ENCODE measurements at regions of chr10 and their contacts with region 1.

Region 1: GRCh38 chr10:66180581-66181318 is 745.1 kb upstream of the LRRTM3 start:
- DNase-seq: peak in 1 of 2 donors; percentile 41
- ATAC-seq: peak in 7 of 8 donors; percentile 39 to 74 (median 58)
- H3K4me3 ChIP-seq: no peak overlapping the region
- H3K27ac ChIP-seq: peak overlapping the region in 1 of 10 donors; percentile 5
- H3K4me1 ChIP-seq: peaks cover 0 to 4% (median 0%) of the 10 kb centered on the region in 9 donors
- H3K27me3 ChIP-seq: no peaks in the 10 kb centered on the region
- CTCF ChIP-seq: peak; percentile 56 to 83 (median 69)

Region 2: GRCh38 chr10:64733980-64734379 is 1446.8 kb before region 1 on chr10:
- intact Hi-C with region 1: loop called in 1 of 10 experiments (anchors 10 kb)
- DNase-seq: no peak
- ATAC-seq: no peak
- H3K4me3 ChIP-seq: no peak overlapping the region
- H3K27ac ChIP-seq: no peak overlapping the region
- H3K4me1 ChIP-seq: no peaks in the 10 kb centered on the region
- H3K27me3 ChIP-seq: no peaks in the 10 kb centered on the region
- CTCF ChIP-seq: peak in 5 of 9 donors; percentile 20 to 54 (median 34)

Region 3: GRCh38 chr10:64977915-64978314 is 1202.8 kb before region 1 on chr10:
- intact Hi-C with region 1: loop called in 2 of 10 experiments (anchors 5 to 10 kb)
- DNase-seq: no peak
- ATAC-seq: no peak
- H3K4me3 ChIP-seq: no peak overlapping the region
- H3K27ac ChIP-seq: no peak overlapping the region
- H3K4me1 ChIP-seq: no peaks in the 10 kb centered on the region
- H3K27me3 ChIP-seq: no peaks in the 10 kb centered on the region
- CTCF ChIP-seq: peak in 4 of 9 donors; percentile 15 to 43 (median 35)

Region 4: DNA sequence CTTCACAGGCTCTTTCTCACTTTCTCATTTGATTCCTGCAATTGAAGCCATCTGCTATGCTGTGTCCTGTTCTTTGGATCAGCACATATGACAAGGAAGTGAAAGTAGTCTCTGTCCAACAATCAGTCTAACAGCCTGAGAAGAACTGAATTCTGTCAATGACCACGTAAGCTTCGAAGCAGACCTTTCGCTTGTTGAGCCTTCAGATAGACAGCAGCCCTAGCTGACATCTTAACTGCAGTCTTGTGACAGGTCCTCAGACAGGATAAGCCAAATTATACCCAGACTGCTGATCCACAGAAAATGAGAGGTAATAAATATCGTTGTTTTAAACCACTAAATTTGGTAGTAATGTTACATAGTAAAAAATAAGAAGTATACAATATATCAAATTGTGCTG is 54.1 kb after region 1 on chr10:
- intact Hi-C with region 1: no loop called
- DNase-seq: no peak
- ATAC-seq: no peak
- H3K4me3 ChIP-seq: no peak overlapping the region
- H3K27ac ChIP-seq: no peak overlapping the region
- H3K4me1 ChIP-seq: no peaks in the 10 kb centered on the region
- H3K27me3 ChIP-seq: no peaks in the 10 kb centered on the region
- CTCF ChIP-seq: no peak

Region 5: DNA sequence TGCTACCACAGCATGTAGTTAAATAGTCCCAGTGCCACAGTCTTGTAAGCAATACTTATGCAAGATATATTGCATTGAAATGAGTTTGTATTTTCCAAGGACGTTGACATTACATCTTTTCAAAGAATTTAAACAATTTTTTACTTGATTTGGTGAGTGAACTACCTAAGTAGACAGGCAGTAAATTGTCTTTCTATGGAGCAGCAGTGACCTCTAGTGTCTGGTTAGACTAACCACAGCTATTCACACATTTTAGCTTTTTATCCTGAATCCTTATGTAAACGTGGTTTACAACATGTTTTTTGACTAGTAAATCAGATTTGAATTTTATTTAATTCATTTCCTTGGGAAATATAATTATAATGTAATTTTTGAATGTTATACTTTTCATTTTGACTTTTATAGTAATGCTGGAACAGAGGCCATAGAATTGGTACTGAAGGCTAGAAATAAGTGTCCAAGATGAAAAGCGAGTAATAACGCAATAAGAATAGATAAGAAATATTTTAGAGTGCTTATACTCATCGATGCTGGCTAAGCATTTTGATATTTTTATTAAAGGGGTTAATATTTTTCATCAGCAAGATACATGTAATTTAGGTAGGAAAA is 750.7 kb after region 1 on chr10:
- intact Hi-C with region 1: loop called in 1 of 10 experiments (anchors 5 kb)
- DNase-seq: no peak
- ATAC-seq: peak in 4 of 8 donors; percentile 31 to 60 (median 44)
- H3K4me3 ChIP-seq: no peak overlapping the region
- H3K27ac ChIP-seq: no peak overlapping the region
- H3K4me1 ChIP-seq: peaks cover 0 to 9% (median 0%) of the 10 kb centered on the region in 9 donors
- H3K27me3 ChIP-seq: peaks cover 0 to 47% (median 28%) of the 10 kb centered on the region in 7 donors
- CTCF ChIP-seq: peak; percentile 56 to 86 (median 83)

Measured in heart right ventricle (tissue), 16 donors.